Panc1 (cell line): ENCODE measurements at regions of chr5 and their contacts with region 1.

Region 1: GRCh38 chr5:133926489-133927299 is 41.7 kb downstream of the C5orf15 start:
- DNase-seq: no peak
- ATAC-seq: no peak
- H3K4me3 ChIP-seq: no peak overlapping the region
- H3K27ac ChIP-seq: no peak overlapping the region
- H3K4me1 ChIP-seq: no peaks in the 10 kb centered on the region; the same call in 1 of the 2 replicates
- H3K27me3 ChIP-seq: peaks cover 4% of the 10 kb centered on the region; the same call in 1 of the 2 replicates
- CTCF ChIP-seq: no peak

Region 2: DNA sequence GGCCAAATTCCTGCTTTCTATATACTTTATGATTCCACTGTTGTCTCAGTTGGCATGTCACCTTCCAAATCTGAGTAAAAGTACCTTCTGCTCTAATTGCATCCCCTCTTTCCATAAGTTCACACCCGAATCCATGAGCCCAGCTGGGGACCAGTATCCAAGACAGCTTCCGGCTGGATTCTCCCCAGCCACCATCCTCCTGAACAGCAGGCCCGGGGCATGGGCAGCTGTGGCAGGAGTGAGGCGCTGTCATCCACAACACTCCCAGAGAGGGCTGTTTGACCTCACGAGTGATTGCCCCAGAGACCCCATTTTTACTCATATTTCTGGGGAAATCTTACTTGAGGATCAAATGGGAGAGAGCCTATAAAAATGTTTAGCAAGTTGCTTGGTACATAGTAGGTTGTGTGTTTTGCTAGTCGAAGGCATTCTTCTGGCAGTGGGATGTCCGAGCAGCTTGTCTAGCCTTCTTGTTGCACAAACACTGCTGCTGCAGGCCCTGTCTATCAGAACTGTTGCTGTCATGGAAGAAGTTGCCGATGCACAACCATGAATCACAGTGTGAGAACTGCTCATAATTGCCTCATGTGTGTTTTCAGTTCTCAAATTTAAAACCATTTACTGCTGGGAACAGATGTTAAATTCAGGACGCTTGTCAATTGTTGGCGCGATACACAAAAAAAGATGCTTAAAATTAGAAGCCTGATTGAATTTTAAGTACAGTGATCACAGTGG is 781.1 kb before region 1 on chr5:
- CTCF ChIA-PET with region 1: no interaction called
- POLR2A ChIA-PET with region 1: interaction called, 13 read pairs
- in situ Hi-C with region 1: no loop called
- intact Hi-C with region 1: no loop called
- DNase-seq: no peak
- ATAC-seq: no peak
- H3K4me3 ChIP-seq: no peak overlapping the region
- H3K27ac ChIP-seq: no peak overlapping the region
- H3K4me1 ChIP-seq: no peaks in the 10 kb centered on the region
- H3K27me3 ChIP-seq: no peaks in the 10 kb centered on the region
- CTCF ChIP-seq: no peak

Region 3: DNA sequence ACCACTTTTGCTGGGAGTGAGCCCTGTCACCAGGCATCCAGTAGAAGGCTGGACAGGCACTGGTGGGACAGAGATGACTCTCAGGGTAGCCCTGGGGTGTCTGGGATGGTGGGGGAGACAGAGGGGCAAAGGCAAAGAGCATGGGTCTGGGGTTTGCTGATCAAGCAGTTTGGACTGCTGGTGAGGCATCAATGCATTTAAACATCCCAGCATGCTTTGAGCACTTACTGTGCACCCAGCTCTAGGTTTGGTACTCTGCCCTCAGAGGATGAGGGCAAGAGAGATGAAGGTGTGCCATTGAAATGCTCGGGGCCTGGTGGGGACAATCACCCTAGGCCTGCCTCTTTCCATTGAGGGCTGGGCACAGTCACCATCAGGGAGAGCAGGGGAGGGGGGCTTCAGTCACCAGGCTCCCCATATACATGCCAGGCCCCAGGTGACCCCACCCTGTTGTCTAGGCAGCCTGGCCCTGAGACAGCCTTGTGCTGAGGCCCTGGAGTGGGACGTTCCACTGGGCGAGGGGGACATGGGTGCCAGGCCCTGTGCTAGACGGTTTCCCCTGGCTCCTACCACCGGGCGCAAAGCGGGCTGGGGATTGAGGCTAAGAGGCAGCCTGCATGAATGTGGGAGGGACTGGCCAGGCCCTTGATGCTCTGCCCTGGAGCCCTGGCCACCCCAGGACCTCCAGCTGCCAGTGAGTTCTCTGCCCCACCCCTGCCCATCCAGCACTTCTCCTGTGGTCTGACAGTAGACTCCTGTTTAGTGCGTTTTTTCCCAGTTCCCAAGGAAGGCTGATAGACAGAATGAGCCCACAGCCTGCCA is 206.6 kb after region 1 on chr5:
- CTCF ChIA-PET with region 1: no interaction called
- POLR2A ChIA-PET with region 1: interaction called, 10 read pairs
- in situ Hi-C with region 1: no loop called
- intact Hi-C with region 1: no loop called
- DNase-seq: no peak
- ATAC-seq: peak; percentile 2; the same call in 1 of the 2 replicates
- H3K4me3 ChIP-seq: no peak overlapping the region
- H3K27ac ChIP-seq: no peak overlapping the region
- H3K4me1 ChIP-seq: peaks cover 17% of the 10 kb centered on the region
- H3K27me3 ChIP-seq: no peaks in the 10 kb centered on the region
- CTCF ChIP-seq: no peak